PC-9 (cell line): ENCODE measurements at regions of chr9 and their contacts with region 1.

Region 1: GRCh38 chr9:126347911-126348760 is 21.5 kb downstream of the MVB12B start:
- DNase-seq: peak; percentile 48 to 68
- H3K4me3 ChIP-seq: no peak overlapping the region
- H3K27ac ChIP-seq: no peak overlapping the region
- H3K4me1 ChIP-seq: peaks cover 10% of the 10 kb centered on the region
- H3K27me3 ChIP-seq: no peaks in the 10 kb centered on the region
- CTCF ChIP-seq: no peak

Region 2: GRCh38 chr9:126371004-126371894 is 23.1 kb after region 1 on chr9:
- CTCF ChIA-PET with region 1: no interaction called
- POLR2A ChIA-PET with region 1: no interaction called
- intact Hi-C with region 1: loop called (anchors 2 kb)
- DNase-seq: peak in 1 of 2 experiments; percentile 68
- H3K4me3 ChIP-seq: no peak overlapping the region
- H3K27ac ChIP-seq: no peak overlapping the region
- H3K4me1 ChIP-seq: peaks cover 37% of the 10 kb centered on the region
- H3K27me3 ChIP-seq: no peaks in the 10 kb centered on the region
- CTCF ChIP-seq: no peak

Region 3: DNA sequence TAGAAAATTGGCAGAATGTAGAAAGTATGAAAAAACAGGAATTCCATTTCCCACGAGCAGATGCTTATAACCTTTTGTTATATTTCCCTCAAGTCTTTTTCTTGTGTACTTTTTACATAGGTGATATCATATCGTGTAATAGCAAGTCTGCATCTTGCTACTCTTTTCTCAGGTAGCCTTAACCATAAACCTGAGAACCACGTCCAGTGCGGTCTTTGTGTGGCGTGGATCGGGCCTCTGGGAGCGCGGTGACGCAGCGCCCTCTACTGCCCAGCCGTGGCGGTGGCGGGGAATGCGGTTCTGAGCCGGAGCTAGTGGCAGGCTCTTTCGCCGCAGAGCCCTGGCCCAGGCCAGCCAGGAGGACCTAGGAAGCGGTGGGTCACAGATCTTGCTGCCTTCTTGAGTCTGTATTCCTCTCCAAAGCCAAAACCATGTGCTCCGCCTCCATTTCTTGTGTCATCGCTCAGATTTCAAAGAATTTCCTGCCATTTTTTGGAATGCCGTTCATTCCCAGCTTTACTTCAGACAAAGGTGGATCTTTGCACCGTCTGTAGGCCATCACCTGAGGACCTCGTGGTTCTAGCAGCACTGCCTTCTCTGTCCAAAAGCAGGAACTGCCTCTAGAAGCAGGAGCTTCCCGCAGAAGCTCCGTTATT is 50.4 kb after region 1 on chr9:
- CTCF ChIA-PET with region 1: no interaction called
- POLR2A ChIA-PET with region 1: no interaction called
- intact Hi-C with region 1: no loop called
- DNase-seq: peak in 1 of 2 experiments; percentile 84
- H3K4me3 ChIP-seq: no peak overlapping the region
- H3K27ac ChIP-seq: no peak overlapping the region
- H3K4me1 ChIP-seq: no peaks in the 10 kb centered on the region; the same call in 1 of the 2 replicates
- H3K27me3 ChIP-seq: no peaks in the 10 kb centered on the region
- CTCF ChIP-seq: peak; percentile 98

Region 4: DNA sequence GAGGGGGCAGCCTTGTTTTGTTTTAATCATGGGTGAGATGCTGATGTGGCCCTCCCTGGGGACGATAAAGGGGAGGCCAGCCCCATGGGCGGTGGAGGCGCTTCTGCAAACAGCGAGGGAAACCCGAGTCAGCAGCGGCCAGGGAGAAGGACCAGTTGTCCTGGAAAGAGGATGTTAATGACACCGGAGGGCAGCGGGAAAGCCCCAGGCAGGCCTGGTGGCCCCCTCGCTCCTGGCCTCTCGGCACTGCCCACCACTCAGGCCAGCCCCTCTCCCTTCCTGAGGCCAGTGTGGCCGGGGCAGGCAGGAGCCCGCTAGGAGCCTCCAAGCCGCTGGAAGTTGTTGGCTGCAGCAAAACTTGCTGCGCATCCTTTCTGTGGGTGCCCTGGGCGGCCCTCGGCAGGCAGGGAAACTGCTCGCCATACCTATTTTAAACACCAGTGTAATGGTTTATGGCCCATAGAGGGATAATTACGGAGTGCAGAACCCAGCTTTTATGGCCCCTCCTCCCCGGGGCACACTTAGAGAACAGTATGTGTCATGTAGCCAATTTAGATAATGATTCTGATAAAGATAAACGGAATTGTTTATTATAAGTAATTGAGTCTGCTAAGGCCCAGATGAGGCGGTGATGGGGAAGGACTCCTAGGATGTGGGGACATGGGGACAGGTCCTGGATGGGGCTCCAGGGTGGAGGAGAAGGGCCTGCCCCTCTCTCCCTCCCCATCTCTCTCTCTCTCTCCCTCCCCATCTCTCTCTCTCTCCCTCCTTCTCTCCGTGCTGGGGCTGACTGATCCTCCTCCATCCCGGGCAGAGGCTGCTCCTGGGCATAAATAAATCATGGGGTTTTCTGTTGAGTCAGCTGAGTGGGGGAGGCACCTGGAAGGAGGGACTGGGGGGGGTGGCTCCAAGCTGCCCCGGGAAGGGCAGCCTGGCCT is 302.5 kb after region 1 on chr9:
- CTCF ChIA-PET with region 1: no interaction called
- POLR2A ChIA-PET with region 1: no interaction called
- intact Hi-C with region 1: no loop called
- DNase-seq: peak in 1 of 2 experiments; percentile 6
- H3K4me3 ChIP-seq: no peak overlapping the region
- H3K27ac ChIP-seq: no peak overlapping the region
- H3K4me1 ChIP-seq: no peaks in the 10 kb centered on the region
- H3K27me3 ChIP-seq: peaks cover 83% of the 10 kb centered on the region
- CTCF ChIP-seq: no peak